ENCODE measurements at regions of chr15 and their contacts with region 1.

Region 1: GRCh38 chr15:38683382-38684242 is 119.0 kb upstream of the RASGRP1 start:
- DNase-seq: no peak
- ATAC-seq: peak; percentile 94
- H3K4me3 ChIP-seq: no peak overlapping the region
- H3K27ac ChIP-seq: no peak overlapping the region
- H3K4me1 ChIP-seq: peaks cover 5% of the 10 kb centered on the region
- H3K27me3 ChIP-seq: no peaks in the 10 kb centered on the region
- CTCF ChIP-seq: peak; percentile 73 to 91 (median 88)
- EP300 ChIP-seq: no peak
- POLR2A ChIP-seq: no peak
- RAD21 ChIP-seq: peak; percentile 99

Region 2: GRCh38 chr15:38461066-38461833 is 222.4 kb before region 1 on chr15:
- CTCF ChIA-PET with region 1: interaction called, 13 read pairs
- POLR2A ChIA-PET with region 1: no interaction called
- RAD21 ChIA-PET with region 1: no interaction called
- SMC1A ChIA-PET with region 1: interaction called, 8 read pairs
- in situ Hi-C with region 1: no loop called
- intact Hi-C with region 1: no loop called
- DNase-seq: no peak
- ATAC-seq: peak; percentile 92
- H3K4me3 ChIP-seq: 0 out of 2 replicates have a peak overlapping the region, but pooled peaks have one; percentile 13
- H3K27ac ChIP-seq: peak overlapping the region; percentile 40
- H3K4me1 ChIP-seq: peaks cover 15% of the 10 kb centered on the region; the same call in 1 of the 2 replicates
- H3K27me3 ChIP-seq: no peaks in the 10 kb centered on the region
- CTCF ChIP-seq: no peak
- EP300 ChIP-seq: 0 out of 4 replicates have a peak, but pooled peaks of 1 of the 2 experiments have one; percentile 36
- POLR2A ChIP-seq: no peak
- RAD21 ChIP-seq: no peak

Region 3: DNA sequence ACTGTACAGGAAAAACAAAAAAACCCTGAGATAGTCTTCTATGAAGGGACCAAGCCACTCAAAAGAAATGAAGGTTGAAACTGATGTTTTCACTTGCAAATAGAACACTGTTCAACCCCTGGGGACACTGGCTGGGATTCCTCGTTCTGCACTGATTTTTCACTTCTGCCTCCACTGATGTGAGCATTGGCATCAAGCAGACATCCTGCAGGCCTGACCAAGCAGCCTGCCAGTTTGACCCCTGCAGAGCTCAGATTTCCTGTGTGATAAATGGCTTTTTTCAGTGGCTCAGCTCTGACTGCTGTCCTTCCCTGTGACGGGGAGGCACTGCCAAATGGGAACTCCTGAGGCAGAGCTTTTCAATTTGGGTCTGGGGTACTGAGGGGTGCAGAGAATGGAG is 169.0 kb before region 1 on chr15:
- CTCF ChIA-PET with region 1: interaction called, 41 read pairs
- POLR2A ChIA-PET with region 1: no interaction called
- RAD21 ChIA-PET with region 1: interaction called, 13 read pairs
- SMC1A ChIA-PET with region 1: interaction called, 208 read pairs
- in situ Hi-C with region 1: no loop called
- intact Hi-C with region 1: no loop called
- DNase-seq: peak; percentile 74
- ATAC-seq: peak; percentile 77
- H3K4me3 ChIP-seq: no peak overlapping the region
- H3K27ac ChIP-seq: 0 out of 2 replicates have a peak overlapping the region, but pooled peaks have one; percentile 8
- H3K4me1 ChIP-seq: peaks cover 7% of the 10 kb centered on the region
- H3K27me3 ChIP-seq: no peaks in the 10 kb centered on the region
- CTCF ChIP-seq: no peak
- EP300 ChIP-seq: no peak
- POLR2A ChIP-seq: no peak
- RAD21 ChIP-seq: no peak

Region 4: GRCh38 chr15:38554354-38554753 is 129.3 kb before region 1 on chr15:
- CTCF ChIA-PET with region 1: interaction called, 276 read pairs
- POLR2A ChIA-PET with region 1: interaction called, 7 read pairs
- RAD21 ChIA-PET with region 1: interaction called, 248 read pairs
- SMC1A ChIA-PET with region 1: interaction called, 293 read pairs
- in situ Hi-C with region 1: no loop called
- intact Hi-C with region 1: no loop called
- DNase-seq: no peak
- ATAC-seq: peak; percentile 80
- H3K4me3 ChIP-seq: no peak overlapping the region
- H3K27ac ChIP-seq: peak overlapping the region; percentile 59; the same call in 1 of the 2 replicates
- H3K4me1 ChIP-seq: peaks cover 45% of the 10 kb centered on the region
- H3K27me3 ChIP-seq: no peaks in the 10 kb centered on the region
- CTCF ChIP-seq: no peak
- EP300 ChIP-seq: no peak
- POLR2A ChIP-seq: no peak
- RAD21 ChIP-seq: no peak

Region 5: DNA sequence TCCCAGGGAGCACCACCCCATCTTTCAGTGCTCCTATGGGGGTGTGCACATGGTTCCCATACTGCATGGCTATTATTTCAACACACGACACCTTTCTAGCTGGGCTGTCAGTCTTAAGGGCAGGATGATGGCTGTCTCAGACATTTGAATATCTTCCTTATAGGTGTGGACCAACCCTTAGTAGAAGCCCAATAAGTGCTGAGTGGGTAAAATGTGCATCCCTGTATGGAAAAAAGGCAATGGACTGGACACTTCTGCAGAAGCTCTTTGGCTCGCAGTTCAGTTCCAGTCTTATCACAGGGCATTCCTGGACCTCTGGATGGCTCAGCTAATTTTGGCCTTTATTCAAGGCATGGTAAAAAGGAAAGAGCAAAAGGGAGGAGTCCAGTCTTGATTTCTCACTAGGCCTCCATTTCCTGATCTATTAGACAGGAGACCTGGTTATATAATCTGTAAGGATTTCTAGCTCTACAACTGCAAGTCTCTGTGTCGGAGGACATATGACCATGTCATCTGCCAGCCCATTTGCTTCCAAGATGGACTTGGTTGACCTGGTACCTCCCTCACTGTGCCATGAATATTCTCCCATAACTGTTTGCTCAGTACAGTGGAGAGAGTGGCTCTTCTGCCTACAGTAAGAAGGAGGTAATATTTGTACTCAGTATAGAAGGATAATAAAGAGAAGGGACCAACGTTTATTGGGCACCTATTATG is 65.2 kb before region 1 on chr15:
- CTCF ChIA-PET with region 1: interaction called, 63 read pairs
- POLR2A ChIA-PET with region 1: interaction called, 5 read pairs
- RAD21 ChIA-PET with region 1: interaction called, 322 read pairs
- SMC1A ChIA-PET with region 1: interaction called, 1,803 read pairs
- in situ Hi-C with region 1: no loop called
- intact Hi-C with region 1: no loop called
- DNase-seq: no peak
- ATAC-seq: no peak
- H3K4me3 ChIP-seq: no peak overlapping the region
- H3K27ac ChIP-seq: no peak overlapping the region
- H3K4me1 ChIP-seq: no peaks in the 10 kb centered on the region
- H3K27me3 ChIP-seq: no peaks in the 10 kb centered on the region
- CTCF ChIP-seq: no peak
- EP300 ChIP-seq: no peak
- POLR2A ChIP-seq: no peak
- RAD21 ChIP-seq: no peak

Region 6: GRCh38 chr15:38660738-38661137 is 22.9 kb before region 1 on chr15:
- CTCF ChIA-PET with region 1: interaction called, 115 read pairs
- POLR2A ChIA-PET with region 1: interaction called, 7 read pairs
- RAD21 ChIA-PET with region 1: interaction called, 517 read pairs
- SMC1A ChIA-PET with region 1: interaction called, 513 read pairs
- in situ Hi-C with region 1: no loop called
- intact Hi-C with region 1: no loop called
- DNase-seq: no peak
- ATAC-seq: peak; percentile 67
- H3K4me3 ChIP-seq: no peak overlapping the region
- H3K27ac ChIP-seq: no peak overlapping the region
- H3K4me1 ChIP-seq: no peaks in the 10 kb centered on the region; the same call in 1 of the 2 replicates
- H3K27me3 ChIP-seq: no peaks in the 10 kb centered on the region
- CTCF ChIP-seq: no peak
- EP300 ChIP-seq: no peak
- POLR2A ChIP-seq: no peak
- RAD21 ChIP-seq: no peak

Region 7: GRCh38 chr15:38828031-38828532 is 144.5 kb after region 1 on chr15:
- CTCF ChIA-PET with region 1: no interaction called
- POLR2A ChIA-PET with region 1: no interaction called
- RAD21 ChIA-PET with region 1: no interaction called
- SMC1A ChIA-PET with region 1: no interaction called
- in situ Hi-C with region 1: no loop called
- intact Hi-C with region 1: no loop called
- DNase-seq: no peak
- ATAC-seq: no peak
- H3K4me3 ChIP-seq: no peak overlapping the region
- H3K27ac ChIP-seq: no peak overlapping the region
- H3K4me1 ChIP-seq: no peaks in the 10 kb centered on the region
- H3K27me3 ChIP-seq: peaks cover 0 to 3% of the 10 kb centered on the region in 2 experiments; a peak in 1 of 4 replicates
- CTCF ChIP-seq: no peak
- EP300 ChIP-seq: no peak
- POLR2A ChIP-seq: no peak
- RAD21 ChIP-seq: no peak